Aorta (tissue), 5 donors: ENCODE measurements at regions of chr4 and their contacts with region 1.

Region 1: GRCh38 chr4:184474263-184475095 is at the start of gene IRF2:
- DNase-seq: peak; percentile 98 to 99
- ATAC-seq: peak; percentile 96
- H3K4me3 ChIP-seq: peak within 1 kb of the TSS; percentile 74 to 89
- H3K27ac ChIP-seq: peak within 1 kb of the TSS; percentile 95 to 99
- H3K4me1 ChIP-seq: no peaks in the 10 kb centered on the region
- H3K27me3 ChIP-seq: no peaks in the 10 kb centered on the region
- total RNA-seq, gene IRF2: 37.1 to 49.4 TPM

Region 2: DNA sequence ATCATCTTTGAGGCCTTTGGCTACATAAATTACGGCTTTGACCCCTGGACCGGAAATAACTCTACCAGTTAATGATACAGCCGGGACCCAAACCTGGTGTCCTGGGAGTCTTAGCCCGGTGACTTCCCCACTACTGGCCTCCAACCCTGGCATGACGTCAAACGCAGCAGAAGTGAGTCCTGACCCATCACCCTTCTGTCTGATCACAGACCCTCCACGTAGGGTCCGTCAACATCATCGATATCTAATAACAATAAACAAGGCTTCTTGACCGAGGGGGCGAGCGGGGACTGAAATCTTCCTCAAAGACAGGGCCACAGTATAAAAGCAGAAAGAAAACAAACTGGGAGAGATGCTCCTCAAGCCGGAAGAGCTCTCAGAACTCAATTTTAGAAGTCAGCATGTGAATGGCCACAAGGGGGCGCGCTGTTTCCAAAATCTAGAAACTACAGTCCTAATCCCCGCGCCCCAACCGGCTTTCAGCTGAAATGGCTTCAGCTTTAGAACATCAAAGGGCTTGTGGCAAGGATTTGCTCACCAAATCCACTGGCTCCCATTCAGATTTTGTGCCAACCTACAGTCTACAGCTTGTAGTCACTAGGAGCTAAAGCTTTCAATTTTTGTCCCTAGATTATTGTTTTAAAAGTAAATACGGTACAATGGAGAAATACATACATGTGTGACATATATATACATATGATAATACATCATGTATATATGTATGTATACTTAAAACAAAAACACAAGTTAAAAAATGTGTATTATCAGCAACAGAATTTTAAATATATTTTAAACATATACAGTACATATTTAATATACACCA is 210.4 kb before region 1 on chr4:
- intact Hi-C with region 1: loop called (anchors 5 to 10 kb)
- DNase-seq: peak; percentile 96 to 98
- ATAC-seq: peak; percentile 89
- H3K4me3 ChIP-seq: no peak overlapping the region
- H3K27ac ChIP-seq: no peak overlapping the region
- H3K4me1 ChIP-seq: no peaks in the 10 kb centered on the region
- H3K27me3 ChIP-seq: no peaks in the 10 kb centered on the region

Region 3: DNA sequence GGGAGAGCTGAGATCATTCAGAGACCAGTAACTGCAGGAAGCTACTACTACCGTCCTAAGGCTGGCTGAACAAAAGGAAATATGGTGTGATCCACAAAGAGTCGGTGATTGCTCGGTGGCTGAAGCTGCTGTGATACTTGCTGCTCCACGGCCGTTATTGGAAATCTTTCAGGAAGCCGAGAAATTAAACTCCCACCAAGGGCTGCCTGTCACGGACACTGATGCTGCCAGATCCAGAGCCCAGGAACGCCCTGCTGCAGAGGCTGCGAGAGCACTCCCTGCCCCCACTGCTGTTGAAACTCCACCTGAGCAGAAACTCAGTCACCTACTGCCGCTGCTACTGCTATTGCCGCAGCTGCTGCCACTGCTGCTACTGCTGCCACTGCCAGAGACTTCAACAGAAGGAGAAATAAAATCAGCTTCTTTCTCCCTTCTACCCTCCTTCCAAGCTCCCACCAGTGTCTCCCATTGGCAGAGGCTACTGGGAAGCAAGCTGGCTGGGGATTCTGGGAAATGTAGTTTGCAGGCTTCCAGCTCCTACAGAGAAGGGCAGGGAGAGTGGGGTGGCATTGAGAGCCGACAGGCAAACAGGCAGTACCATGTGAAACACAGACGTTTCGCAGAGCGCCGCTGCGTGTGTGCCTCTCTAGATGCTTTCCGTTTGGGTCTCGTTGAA is 130.8 kb before region 1 on chr4:
- intact Hi-C with region 1: loop called in 1 of 2 experiments (anchors 5 kb)
- DNase-seq: peak; percentile 79 to 83
- ATAC-seq: peak; percentile 90
- H3K4me3 ChIP-seq: peak overlapping the region; percentile 82 to 98
- H3K27ac ChIP-seq: peak overlapping the region in 1 of 2 donors; percentile 95
- H3K4me1 ChIP-seq: no peaks in the 10 kb centered on the region
- H3K27me3 ChIP-seq: no peaks in the 10 kb centered on the region

Region 4: DNA sequence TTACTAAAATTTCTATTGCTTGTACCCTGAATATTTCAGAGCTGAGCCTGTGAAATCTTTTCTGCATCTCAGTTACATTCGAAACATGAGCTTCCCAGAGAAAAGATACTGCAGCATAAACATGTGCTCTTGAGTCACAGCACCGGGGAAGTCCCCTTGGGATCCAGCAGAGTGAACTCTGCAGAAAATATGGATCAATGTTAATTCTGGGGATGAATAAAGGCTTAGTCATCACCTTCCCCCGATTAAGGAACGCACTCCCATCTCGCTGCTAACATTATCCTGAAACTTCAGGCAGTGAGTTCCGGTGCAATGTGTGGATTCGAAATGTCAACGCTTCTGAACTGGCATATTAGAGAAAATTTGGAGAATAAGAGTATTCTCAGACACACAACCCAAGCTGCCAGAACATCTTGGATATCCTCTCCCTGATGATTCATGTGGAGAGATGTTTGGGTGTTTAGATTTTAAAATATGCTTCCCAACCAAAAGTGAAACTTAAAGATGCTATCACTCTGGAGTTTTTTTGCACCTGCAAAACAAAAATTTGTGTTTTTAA is 90.9 kb before region 1 on chr4:
- intact Hi-C with region 1: loop called in 1 of 2 experiments (anchors 5 kb)
- DNase-seq: peak in 1 of 2 donors; percentile 74
- ATAC-seq: peak; percentile 80
- H3K4me3 ChIP-seq: peak overlapping the region; percentile 29 to 54
- H3K27ac ChIP-seq: peak overlapping the region; percentile 57 to 69
- H3K4me1 ChIP-seq: no peaks in the 10 kb centered on the region
- H3K27me3 ChIP-seq: no peaks in the 10 kb centered on the region

Region 5: DNA sequence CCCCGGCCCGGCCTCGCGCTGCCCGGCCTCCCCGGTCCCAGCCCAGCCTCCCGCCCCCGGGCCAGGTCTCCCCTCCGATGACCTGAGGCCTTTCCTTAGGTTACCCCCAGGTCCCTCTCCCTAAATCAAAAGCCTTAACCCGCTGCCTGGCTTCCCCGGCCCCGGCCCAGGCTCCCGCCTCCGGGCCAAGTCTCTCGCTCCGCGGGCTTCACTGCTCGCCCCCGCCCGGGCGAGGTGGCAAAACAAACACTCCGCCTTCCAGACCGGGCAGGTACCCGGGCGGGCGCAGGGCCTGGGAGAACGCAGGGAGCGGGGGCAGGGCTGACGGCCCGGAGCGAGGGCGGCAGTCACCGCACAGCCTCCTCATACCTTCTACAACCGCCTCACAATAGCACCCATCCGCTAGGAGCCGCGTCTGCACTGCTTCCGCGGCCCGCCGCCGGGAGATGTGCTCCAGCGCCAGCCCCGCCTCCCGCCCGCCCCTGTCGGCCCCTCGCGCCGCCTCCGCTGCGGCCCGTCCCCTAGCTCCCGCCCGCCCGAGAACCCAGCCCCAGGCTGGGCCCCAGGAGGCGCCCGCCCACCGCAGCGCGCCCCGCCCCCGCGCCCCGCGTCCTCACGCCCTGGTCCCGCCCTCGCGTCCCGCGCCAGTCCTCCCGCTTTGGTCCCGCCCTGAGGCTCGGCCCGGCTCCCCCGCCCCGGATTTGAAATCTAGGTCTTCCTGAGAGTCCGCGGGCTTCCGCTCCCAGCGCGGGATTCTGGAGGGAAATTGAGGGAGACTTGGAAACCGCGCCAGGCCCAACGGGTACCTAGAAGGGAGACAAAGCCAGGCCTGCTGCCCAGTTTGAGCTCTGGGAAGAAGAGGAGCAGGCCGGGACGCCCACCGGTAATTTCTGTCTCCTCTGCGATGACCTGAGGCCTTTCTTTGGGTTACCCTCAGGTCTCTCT is 174.8 kb after region 1 on chr4 and contains the starts of genes CASP3 and PRIMPOL:
- intact Hi-C with region 1: loop called (anchors 2 to 5 kb)
- DNase-seq: peak; percentile 98 to 99
- ATAC-seq: peak; percentile 98
- H3K4me3 ChIP-seq: peak within 1 kb of the TSS; percentile 77 to 93
- H3K27ac ChIP-seq: peak within 1 kb of the TSS; percentile 95 to 97
- H3K4me1 ChIP-seq: peaks cover 0 to 4% of the 10 kb centered on the region in 2 donors
- H3K27me3 ChIP-seq: no peaks in the 10 kb centered on the region
- total RNA-seq, gene CASP3: 19.3 to 23.2 TPM
- total RNA-seq, gene PRIMPOL: 16.0 to 23.8 TPM